GM18951 (cell line): ENCODE measurements at regions of chr7 and their contacts with region 1.

Region 1: GRCh38 chr7:97104719-97105238 is 12.7 kb upstream of the SDHAF3 start:
- POLR2A ChIP-seq: no peak

Region 2: GRCh38 chr7:97179454-97180104 is 74.8 kb after region 1 on chr7:
- in situ Hi-C with region 1: loop called (anchors 10 kb)
- POLR2A ChIP-seq: no peak

Region 3: DNA sequence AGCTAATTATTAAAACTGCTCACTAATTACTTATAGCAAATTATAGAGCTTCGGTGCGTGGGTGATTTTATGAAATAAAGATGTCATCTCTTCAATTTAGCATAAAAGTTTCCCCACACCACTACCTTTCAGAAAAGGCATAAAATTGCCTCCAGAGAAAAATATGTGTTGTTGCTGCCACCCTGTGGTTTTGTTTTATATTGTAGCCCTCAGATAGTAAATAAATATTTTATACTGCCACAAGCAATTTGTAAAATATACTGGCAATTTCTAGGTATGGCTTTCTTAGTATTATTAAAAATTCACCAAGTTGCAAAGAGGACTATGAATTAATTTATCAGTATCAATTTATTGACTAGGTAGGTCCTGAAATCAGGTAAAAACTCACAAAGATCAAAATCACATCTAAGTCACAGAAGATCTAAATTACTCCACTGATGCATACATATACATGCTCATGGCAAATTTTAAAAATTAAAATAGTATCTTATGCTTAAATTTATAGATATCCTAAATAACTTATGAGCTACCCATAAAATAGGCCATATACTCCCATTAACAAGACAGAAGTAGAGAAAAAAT is 740.9 kb after region 1 on chr7:
- in situ Hi-C with region 1: loop called (anchors 10 kb)
- POLR2A ChIP-seq: no peak